ENCODE measurements at regions of chr6 and their contacts with region 1.

Region 1: GRCh38 chr6:87731818-87732661 is 30.0 kb upstream of the AKIRIN2 start:
- DNase-seq: peak; percentile 91 to 97
- ATAC-seq: peak; percentile 88 to 90
- H3K4me3 ChIP-seq: peak overlapping the region in 1 of 4 donors; percentile 41
- H3K27ac ChIP-seq: peak overlapping the region; percentile 88 to 97 (median 90)
- H3K4me1 ChIP-seq: peaks cover 41 to 42% of the 10 kb centered on the region in 2 donors
- H3K27me3 ChIP-seq: no peaks in the 10 kb centered on the region
- CTCF ChIP-seq: no peak
- POLR2A ChIP-seq: no peak

Region 2: DNA sequence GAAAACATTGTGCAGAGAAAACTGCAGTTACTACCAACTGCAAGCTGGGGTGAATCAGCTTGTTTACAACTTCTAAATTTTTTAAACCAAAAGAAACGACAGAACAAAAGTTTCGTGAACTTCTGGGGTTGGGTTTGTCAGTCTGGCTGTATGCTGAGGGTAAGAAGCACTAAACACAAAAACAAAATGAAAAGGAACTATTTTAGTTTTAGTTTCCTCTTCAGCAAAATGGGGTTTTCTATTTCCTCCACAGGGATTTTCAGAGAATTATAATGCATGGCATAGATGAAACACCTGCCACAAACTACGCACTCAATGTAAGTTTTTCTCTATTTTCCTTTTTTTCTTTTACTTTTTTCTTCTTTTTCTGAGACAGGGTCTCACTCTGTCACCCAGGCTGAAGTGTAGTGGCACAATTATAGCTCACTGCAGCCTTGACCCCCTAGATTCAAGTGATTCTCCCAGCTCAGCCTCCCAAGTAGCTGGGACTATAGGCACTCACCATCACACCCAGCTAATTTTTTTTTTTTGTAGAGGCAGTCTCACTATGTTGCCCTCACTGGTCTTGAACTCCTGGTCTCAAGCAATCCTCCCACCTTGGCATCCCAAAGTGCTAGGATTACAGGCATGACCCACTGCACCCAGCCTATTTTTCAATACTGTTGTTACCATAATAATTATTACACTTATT is 677.8 kb before region 1 on chr6:
- in situ Hi-C with region 1: no loop called
- intact Hi-C with region 1: no loop called
- DNase-seq: no peak
- ATAC-seq: no peak
- H3K4me3 ChIP-seq: no peak overlapping the region
- H3K27ac ChIP-seq: no peak overlapping the region
- H3K4me1 ChIP-seq: no peaks in the 10 kb centered on the region
- H3K27me3 ChIP-seq: no peaks in the 10 kb centered on the region
- CTCF ChIP-seq: no peak
- POLR2A ChIP-seq: no peak

Region 3: GRCh38 chr6:87671555-87672029 is 60.4 kb before region 1 on chr6:
- in situ Hi-C with region 1: no loop called
- intact Hi-C with region 1: loop called (anchors 2 kb)
- DNase-seq: peak; percentile 38 to 68
- ATAC-seq: peak; percentile 95 to 97
- H3K4me3 ChIP-seq: no peak overlapping the region
- H3K27ac ChIP-seq: peak overlapping the region; percentile 83 to 99 (median 84)
- H3K4me1 ChIP-seq: peaks cover 44 to 51% of the 10 kb centered on the region in 2 donors
- H3K27me3 ChIP-seq: no peaks in the 10 kb centered on the region
- CTCF ChIP-seq: no peak
- POLR2A ChIP-seq: no peak

Region 4: DNA sequence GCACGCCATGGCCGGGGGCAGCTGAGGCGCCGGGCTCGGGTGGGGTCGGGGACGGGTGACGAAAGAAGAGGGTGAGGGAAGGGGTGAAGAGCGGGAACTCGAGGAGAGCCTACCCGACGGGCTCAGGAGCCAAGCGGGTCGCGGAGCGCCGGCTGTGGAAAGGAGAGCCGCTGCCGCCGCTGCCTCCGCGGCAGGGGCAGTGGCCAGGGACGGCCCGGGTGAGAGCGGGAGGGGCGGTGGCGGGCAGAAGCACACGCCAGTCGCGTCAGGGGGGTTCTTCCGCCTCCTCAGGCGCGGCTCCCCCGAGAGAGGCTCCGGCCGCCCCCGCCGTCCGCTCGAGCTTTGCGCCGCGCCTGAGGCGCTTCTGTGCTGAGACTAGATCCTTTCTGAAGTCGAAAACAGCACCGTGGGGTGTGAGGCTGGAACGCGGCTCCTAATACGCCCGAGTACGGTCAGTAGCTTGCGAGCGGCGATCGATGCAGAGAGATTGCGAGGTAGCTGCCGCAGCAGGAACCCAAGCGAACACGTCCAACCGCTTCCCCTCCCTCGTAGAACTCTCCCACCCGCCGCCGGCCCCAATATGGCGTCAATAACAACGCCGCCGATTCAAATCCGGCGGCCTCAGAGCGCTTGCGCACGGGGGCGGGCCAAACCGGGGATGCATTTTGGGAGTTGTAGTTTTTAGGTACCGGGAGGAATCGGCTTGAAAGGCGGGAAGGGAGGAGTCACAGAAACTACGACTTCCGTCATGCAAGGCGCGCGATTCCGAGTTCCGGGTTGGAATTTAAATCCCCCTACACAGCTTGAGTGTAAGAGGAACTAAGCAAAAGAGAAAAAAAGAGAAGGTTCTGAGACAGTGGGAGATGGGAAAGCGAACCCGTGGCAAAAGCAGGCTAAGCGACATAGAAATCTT is 30.1 kb before region 1 on chr6 and contains the start of gene AKIRIN2:
- in situ Hi-C with region 1: no loop called
- intact Hi-C with region 1: loop called (anchors 1 kb)
- DNase-seq: peak; percentile 97
- ATAC-seq: peak; percentile 80 to 81
- H3K4me3 ChIP-seq: peak within 1 kb of the TSS; percentile 86 to 94 (median 94)
- H3K27ac ChIP-seq: peak within 1 kb of the TSS; percentile 94 to 99 (median 97)
- H3K4me1 ChIP-seq: peaks cover 24 to 32% of the 10 kb centered on the region in 2 donors
- H3K27me3 ChIP-seq: no peaks in the 10 kb centered on the region
- CTCF ChIP-seq: no peak
- POLR2A ChIP-seq: peak; percentile 99 to 100
- total RNA-seq, gene AKIRIN2: 25.6 to 44.5 (median 33.1) TPM

Region 5: DNA sequence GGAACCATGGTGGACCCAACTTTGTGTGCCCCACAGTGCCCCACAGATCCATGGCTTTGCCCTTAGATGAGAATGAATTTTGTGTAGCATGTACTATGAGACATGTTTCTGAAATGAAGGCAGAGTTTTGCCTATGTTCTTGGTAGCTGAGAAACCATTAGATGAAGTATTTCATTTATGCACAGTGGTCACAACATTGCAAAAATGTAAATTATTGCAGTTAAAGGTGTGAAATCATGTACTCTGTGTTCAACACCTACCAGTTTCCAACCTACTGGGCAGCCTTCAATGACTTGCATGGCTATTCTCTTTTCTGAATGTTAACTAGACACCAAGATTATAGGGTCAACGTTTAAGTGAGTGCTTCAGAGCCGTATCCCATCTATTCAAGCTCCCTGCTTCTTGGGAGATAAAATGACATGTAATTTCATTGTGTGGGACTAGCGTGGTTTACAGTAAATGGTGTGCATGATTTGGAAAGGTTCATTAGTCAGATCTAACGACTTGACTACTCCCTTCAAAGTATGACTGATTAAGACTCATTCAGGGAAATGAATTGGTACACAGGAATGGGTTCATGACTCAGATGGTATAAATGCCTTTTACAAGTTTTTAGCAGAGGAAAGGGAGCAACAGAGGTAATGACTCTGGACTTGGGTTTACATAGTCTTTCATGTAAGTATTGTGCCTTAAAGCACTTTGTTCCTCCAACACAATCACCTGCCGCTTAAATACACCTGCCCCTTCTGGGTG is 76.1 kb after region 1 on chr6:
- in situ Hi-C with region 1: no loop called
- intact Hi-C with region 1: no loop called
- DNase-seq: no peak
- ATAC-seq: no peak
- H3K4me3 ChIP-seq: no peak overlapping the region
- H3K27ac ChIP-seq: no peak overlapping the region
- H3K4me1 ChIP-seq: peaks cover 0 to 4% of the 10 kb centered on the region in 2 donors
- H3K27me3 ChIP-seq: no peaks in the 10 kb centered on the region
- CTCF ChIP-seq: no peak
- POLR2A ChIP-seq: no peak

Measured in gastrocnemius medialis (tissue), 4 donors.